HepG2 (cell line): ENCODE measurements at regions of chr20 and their contacts with region 1.

Region 1: DNA sequence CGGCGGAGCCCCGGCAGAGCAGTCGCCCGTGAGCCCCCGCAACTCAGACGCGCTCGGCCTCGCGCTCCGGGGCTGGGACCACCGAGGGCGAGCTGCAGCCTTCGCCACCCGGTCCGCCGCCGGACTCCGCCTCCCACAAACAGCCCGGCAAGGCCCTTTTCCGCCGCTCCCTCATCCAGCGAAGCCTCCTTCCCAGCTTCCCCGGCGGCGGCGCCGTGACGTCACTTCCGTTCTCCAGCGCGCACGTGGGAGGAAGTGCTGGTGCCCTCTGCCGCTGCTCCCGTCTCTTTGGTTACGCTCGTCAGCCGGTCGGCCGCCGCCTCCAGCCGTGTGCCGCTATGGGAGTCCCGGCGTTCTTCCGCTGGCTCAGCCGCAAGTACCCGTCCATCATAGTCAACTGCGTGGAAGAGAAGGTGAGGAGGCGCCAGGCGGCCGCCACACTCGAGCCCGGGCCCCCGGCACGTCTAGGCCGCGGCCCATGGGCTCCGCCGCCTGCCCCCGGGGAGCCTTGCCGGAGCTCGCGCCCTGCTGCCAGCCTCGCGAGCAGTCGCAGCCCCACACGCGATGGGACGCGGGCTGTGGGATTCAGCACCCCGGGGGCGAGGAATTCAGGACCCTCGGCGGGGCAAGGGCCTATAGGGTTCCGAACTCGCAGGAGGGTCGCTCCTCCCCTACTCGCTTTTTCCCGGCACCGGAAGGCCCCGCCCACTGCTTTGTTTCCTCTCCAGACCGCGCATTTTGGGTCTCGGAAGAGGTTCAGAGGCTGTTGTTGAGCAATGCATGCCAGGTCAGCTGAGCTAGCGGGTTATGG is at the start of gene XRN2:
- DNase-seq: peak; percentile 98
- ATAC-seq: peak; percentile 93
- H3K4me3 ChIP-seq: peak within 1 kb of the TSS; percentile 79 to 88 (median 81)
- H3K27ac ChIP-seq: peak within 1 kb of the TSS; percentile 88
- H3K4me1 ChIP-seq: peaks cover 38% of the 10 kb centered on the region
- H3K27me3 ChIP-seq: no peaks in the 10 kb centered on the region; a peak in 1 of 5 replicates
- CTCF ChIP-seq: peak; percentile 72
- EP300 ChIP-seq: peak; percentile 45 to 50; a peak in 3 of 4 replicates
- POLR2A ChIP-seq: peak; percentile 95 to 99
- RAD21 ChIP-seq: peak; percentile 55
- total RNA-seq, gene XRN2: 171 and 256 TPM in 2 replicates

Region 2: DNA sequence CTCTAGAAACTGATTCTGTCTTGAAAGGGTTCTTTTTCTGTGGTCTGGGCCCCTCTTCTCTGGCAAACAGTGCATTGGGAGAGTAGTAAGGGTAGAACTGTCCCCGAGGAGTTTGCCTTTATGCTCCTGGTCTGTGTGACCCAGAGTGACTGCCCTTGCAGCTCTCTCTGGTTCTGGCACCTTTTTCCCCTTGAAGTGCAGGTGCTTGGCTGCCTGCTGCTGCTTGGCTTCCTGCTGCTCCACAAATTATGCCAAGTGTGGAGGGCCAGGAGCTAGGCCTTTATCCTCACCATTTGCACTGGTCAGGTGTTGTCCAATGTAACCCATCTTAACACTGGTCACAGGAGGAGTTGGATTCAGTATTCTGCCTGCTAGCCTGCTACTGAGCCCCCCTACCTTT is 166.2 kb before region 1 on chr20:
- CTCF ChIA-PET with region 1: no interaction called
- POLR2A ChIA-PET with region 1: interaction called, 6 read pairs
- in situ Hi-C with region 1: no loop called
- intact Hi-C with region 1: loop called (anchors 5 kb)
- DNase-seq: no peak
- ATAC-seq: no peak
- H3K4me3 ChIP-seq: no peak overlapping the region
- H3K27ac ChIP-seq: peak overlapping the region; percentile 8
- H3K4me1 ChIP-seq: peaks cover 74% of the 10 kb centered on the region
- H3K27me3 ChIP-seq: no peaks in the 10 kb centered on the region
- CTCF ChIP-seq: no peak
- EP300 ChIP-seq: no peak
- POLR2A ChIP-seq: no peak
- RAD21 ChIP-seq: no peak

Region 3: DNA sequence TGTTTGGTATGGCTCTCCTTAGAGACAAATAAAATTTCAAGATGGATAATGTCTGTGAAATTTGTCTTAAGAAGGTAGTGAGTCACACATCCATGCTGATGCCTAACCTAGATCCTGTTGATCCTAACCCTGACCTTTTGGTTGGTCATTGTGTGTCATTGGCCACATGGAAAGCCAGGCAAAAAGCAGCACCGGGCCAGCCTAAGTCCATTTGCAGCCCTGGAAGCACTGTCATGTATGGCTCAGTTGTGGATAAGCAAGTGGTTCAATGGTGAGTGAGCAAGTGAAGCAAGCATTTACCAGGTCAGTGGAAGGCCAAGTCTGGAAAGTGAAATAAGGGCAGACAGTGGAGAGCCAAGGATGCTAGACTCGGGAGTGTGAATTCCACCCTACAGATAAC is 12.2 kb before region 1 on chr20:
- CTCF ChIA-PET with region 1: no interaction called
- POLR2A ChIA-PET with region 1: interaction called, 18 read pairs
- in situ Hi-C with region 1: no loop called
- intact Hi-C with region 1: no loop called
- DNase-seq: no peak
- ATAC-seq: peak; percentile 11; the same call in 1 of the 3 replicates
- H3K4me3 ChIP-seq: no peak overlapping the region
- H3K27ac ChIP-seq: no peak overlapping the region
- H3K4me1 ChIP-seq: peaks cover 28% of the 10 kb centered on the region
- H3K27me3 ChIP-seq: 0 out of 5 replicates have a peak, but pooled peaks cover 0 to 12% of the 10 kb centered on the region in 2 experiments
- CTCF ChIP-seq: no peak
- EP300 ChIP-seq: no peak
- POLR2A ChIP-seq: no peak
- RAD21 ChIP-seq: no peak

Region 4: DNA sequence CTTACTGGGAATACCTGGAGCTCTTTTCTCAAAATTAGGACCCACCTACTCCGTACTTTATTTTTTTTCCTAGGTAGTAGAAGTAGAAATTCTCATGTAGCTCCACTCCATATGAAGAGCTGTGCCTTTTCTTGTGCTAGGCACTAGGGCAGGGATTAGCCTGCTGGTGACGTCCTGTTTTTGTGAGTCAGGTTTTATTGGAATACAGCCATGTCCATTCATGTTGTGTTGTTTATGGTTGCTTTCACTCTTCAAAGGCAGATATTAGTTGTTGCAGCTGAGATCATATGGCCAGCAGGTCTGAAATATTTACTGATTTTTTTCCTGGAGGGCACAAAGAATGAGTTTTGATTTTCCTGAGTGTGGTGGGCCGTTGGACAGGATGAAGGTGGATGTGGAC is 20.4 kb after region 1 on chr20:
- CTCF ChIA-PET with region 1: no interaction called
- POLR2A ChIA-PET with region 1: interaction called, 15 read pairs
- in situ Hi-C with region 1: no loop called
- intact Hi-C with region 1: no loop called
- DNase-seq: no peak
- ATAC-seq: no peak
- H3K4me3 ChIP-seq: no peak overlapping the region
- H3K27ac ChIP-seq: no peak overlapping the region
- H3K4me1 ChIP-seq: peaks cover 31% of the 10 kb centered on the region
- H3K27me3 ChIP-seq: no peaks in the 10 kb centered on the region
- CTCF ChIP-seq: no peak
- EP300 ChIP-seq: no peak
- POLR2A ChIP-seq: no peak
- RAD21 ChIP-seq: no peak

Region 5: GRCh38 chr20:21364413-21364812 is 61.1 kb after region 1 on chr20:
- CTCF ChIA-PET with region 1: no interaction called
- POLR2A ChIA-PET with region 1: interaction called, 10 read pairs
- in situ Hi-C with region 1: no loop called
- intact Hi-C with region 1: no loop called
- DNase-seq: peak; percentile 73
- ATAC-seq: peak; percentile 85
- H3K4me3 ChIP-seq: no peak overlapping the region
- H3K27ac ChIP-seq: peak overlapping the region; percentile 4
- H3K4me1 ChIP-seq: peaks cover 23% of the 10 kb centered on the region
- H3K27me3 ChIP-seq: no peaks in the 10 kb centered on the region
- CTCF ChIP-seq: no peak
- EP300 ChIP-seq: no peak; a peak in 1 of 4 replicates
- POLR2A ChIP-seq: no peak
- RAD21 ChIP-seq: no peak